GM10248 (cell line): ENCODE measurements at regions of chr7 and their contacts with region 1.

Region 1: GRCh38 chr7:135204341-135204749 is 7.0 kb downstream of the WDR91 start:
- DNase-seq: no peak
- CTCF ChIP-seq: no peak

Region 2: GRCh38 chr7:134962270-134962780 is 242.0 kb before region 1 on chr7:
- CTCF ChIA-PET with region 1: no interaction called
- POLR2A ChIA-PET with region 1: no interaction called
- DNase-seq: no peak
- CTCF ChIP-seq: no peak

Region 3: DNA sequence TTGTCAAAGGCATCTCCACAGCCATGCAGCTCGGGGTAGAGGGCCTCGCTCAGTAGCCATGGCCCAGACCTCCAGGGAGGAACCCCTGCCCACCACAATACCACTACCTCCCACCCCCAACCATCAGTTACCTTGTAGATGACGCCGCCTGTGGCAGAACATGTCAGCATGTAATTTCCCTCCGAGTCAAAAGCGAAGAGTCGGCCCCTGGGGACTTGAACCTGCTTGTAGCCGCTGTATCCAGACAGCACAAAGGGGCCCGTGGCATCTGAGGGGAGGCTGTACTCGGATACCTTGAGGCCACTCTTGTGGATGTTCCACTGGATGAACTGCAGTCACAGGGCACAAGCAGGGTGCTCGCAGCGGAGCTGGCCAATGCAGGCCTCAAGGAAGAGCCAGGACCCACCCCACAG is 17.5 kb before region 1 on chr7:
- CTCF ChIA-PET with region 1: interaction called, 16 read pairs
- POLR2A ChIA-PET with region 1: interaction called, 18 read pairs
- DNase-seq: peak; percentile 80
- CTCF ChIP-seq: no peak